ENCODE measurements at regions of chr6 and their contacts with region 1.

Region 1: DNA sequence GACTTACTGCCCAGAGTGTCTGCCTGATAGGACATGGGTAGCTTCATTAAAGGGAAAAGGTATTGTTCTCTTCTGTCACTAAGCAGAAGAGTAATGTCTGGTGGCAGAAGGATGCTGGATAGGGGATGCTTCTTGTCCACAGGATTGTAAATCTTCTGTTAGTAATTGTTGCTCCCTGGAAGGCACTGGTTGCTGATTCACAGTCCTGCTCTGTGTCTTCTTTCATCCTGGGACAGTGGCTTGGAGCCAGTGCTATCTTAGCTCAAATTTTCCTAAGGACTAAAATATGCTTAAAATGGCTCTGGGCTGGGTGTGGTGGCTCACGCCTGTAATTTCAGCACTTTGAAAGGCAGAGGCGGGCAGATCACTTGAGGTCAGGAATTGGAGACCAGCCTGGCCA is 48.0 kb downstream of the SYTL3 start:
- DNase-seq: no peak
- ATAC-seq: peak in 2 of 4 donors; percentile 41 to 43
- H3K4me3 ChIP-seq: no peak overlapping the region
- H3K27ac ChIP-seq: no peak overlapping the region
- H3K4me1 ChIP-seq: no peaks in the 10 kb centered on the region
- H3K27me3 ChIP-seq: no peaks in the 10 kb centered on the region
- CTCF ChIP-seq: no peak
- POLR2A ChIP-seq: no peak

Region 2: GRCh38 chr6:158213925-158214674 is 483.7 kb before region 1 on chr6:
- intact Hi-C with region 1: loop called in 2 of 10 experiments (anchors 10 kb)
- DNase-seq: peak; percentile 46 to 70 (median 58)
- ATAC-seq: peak; percentile 91 to 97 (median 95)
- H3K4me3 ChIP-seq: no peak overlapping the region
- H3K27ac ChIP-seq: no peak overlapping the region
- H3K4me1 ChIP-seq: peaks cover 0 to 1% (median 0%) of the 10 kb centered on the region in 12 donors
- H3K27me3 ChIP-seq: no peaks in the 10 kb centered on the region
- CTCF ChIP-seq: peak; percentile 56 to 80 (median 68)
- POLR2A ChIP-seq: no peak

Region 3: GRCh38 chr6:158631678-158632537 is 65.9 kb before region 1 on chr6:
- intact Hi-C with region 1: loop called in 1 of 10 experiments (anchors 5 kb)
- DNase-seq: peak; percentile 81 to 89 (median 86)
- ATAC-seq: peak; percentile 89 to 91 (median 90)
- H3K4me3 ChIP-seq: peak overlapping the region in 4 of 12 donors; percentile 0 to 30 (median 22)
- H3K27ac ChIP-seq: peak overlapping the region; percentile 24 to 88 (median 74)
- H3K4me1 ChIP-seq: peaks cover 0 to 38% (median 20%) of the 10 kb centered on the region in 12 donors
- H3K27me3 ChIP-seq: no peaks in the 10 kb centered on the region
- CTCF ChIP-seq: no peak
- POLR2A ChIP-seq: no peak

Region 4: GRCh38 chr6:158644231-158645063 is 53.4 kb before region 1 on chr6 and contains the start of gene DYNLT1:
- intact Hi-C with region 1: loop called in 2 of 10 experiments (anchors 5 kb)
- DNase-seq: peak; percentile 93 to 97 (median 96)
- ATAC-seq: peak; percentile 94 to 96 (median 96)
- H3K4me3 ChIP-seq: peak within 1 kb of the TSS; percentile 72 to 99 (median 92)
- H3K27ac ChIP-seq: peak within 1 kb of the TSS; percentile 94 to 100 (median 98)
- H3K4me1 ChIP-seq: peaks cover 8 to 61% (median 39%) of the 10 kb centered on the region in 12 donors
- H3K27me3 ChIP-seq: no peaks in the 10 kb centered on the region
- CTCF ChIP-seq: peak in 1 of 12 donors; percentile 13
- POLR2A ChIP-seq: peak; percentile 86 to 96
- total RNA-seq, gene DYNLT1: 68.4 to 177 (median 121) TPM

Region 5: GRCh38 chr6:158654960-158655489 is 42.8 kb before region 1 on chr6:
- intact Hi-C with region 1: loop called in 2 of 10 experiments (anchors 5 kb)
- DNase-seq: no peak
- ATAC-seq: peak in 1 of 4 donors; percentile 21
- H3K4me3 ChIP-seq: no peak overlapping the region
- H3K27ac ChIP-seq: peak overlapping the region in 10 of 12 donors; percentile 54 to 93 (median 80)
- H3K4me1 ChIP-seq: peaks cover 0 to 46% (median 18%) of the 10 kb centered on the region in 12 donors
- H3K27me3 ChIP-seq: no peaks in the 10 kb centered on the region
- CTCF ChIP-seq: no peak
- POLR2A ChIP-seq: no peak

Region 6: GRCh38 chr6:158991017-158991723 is 293.4 kb after region 1 on chr6:
- intact Hi-C with region 1: no loop called
- DNase-seq: no peak
- ATAC-seq: no peak
- H3K4me3 ChIP-seq: no peak overlapping the region
- H3K27ac ChIP-seq: no peak overlapping the region
- H3K4me1 ChIP-seq: peaks cover 0 to 8% (median 0%) of the 10 kb centered on the region in 12 donors
- H3K27me3 ChIP-seq: no peaks in the 10 kb centered on the region
- CTCF ChIP-seq: no peak
- POLR2A ChIP-seq: no peak